H1 (cell line): ENCODE measurements at regions of chr3 and their contacts with region 1.

Region 1: DNA sequence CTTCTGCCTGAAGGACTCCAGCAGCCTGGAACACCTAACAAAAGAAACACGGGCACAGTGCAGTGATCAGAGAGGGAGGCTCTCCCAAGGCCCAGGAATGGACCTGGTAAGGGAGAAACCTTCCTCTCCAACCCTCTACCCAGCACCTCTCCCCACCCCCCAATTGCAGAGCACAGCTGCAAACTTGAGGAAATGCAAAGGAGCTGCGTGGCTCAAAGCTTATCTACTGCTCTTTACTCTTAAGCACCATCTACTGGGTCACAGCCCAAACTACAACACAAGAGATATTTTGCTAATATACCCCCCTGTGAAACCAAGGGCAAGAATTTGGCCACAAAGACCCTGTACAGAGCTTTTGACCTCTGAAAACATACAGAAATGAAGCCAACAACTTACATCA is 328.3 kb downstream of the OXSM start:
- DNase-seq: peak; percentile 27 to 47
- H3K4me3 ChIP-seq: no peak overlapping the region
- H3K27ac ChIP-seq: no peak overlapping the region
- H3K4me1 ChIP-seq: peaks cover 0 to 4% (median 2%) of the 10 kb centered on the region in 4 experiments; a peak in 4 of 7 replicates
- H3K27me3 ChIP-seq: no peaks in the 10 kb centered on the region
- CTCF ChIP-seq: peak in 2 of 3 experiments; percentile 61 to 68; a peak in 3 of 4 replicates
- EP300 ChIP-seq: no peak
- POLR2A ChIP-seq: no peak
- RAD21 ChIP-seq: peak; percentile 75 to 78

Region 2: DNA sequence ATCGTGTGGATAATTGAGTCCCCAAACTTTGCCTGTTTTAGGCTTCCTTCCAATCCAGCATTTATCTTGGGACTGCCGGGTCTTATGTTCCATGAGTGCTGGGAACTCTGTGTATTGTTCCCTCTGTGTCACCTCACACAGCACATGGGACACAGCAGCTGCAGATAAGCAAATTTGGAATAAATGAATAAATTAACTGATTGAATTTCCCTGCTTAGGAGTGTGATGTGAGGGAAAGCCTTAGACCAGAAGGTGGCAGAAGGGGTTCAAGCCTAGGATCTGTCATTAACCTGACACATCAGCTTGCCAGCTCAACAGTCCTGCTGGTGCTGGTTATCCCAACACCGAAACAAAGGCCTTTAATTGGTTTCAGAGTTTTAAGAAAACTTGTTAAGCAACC is 214.0 kb before region 1 on chr3:
- CTCF ChIA-PET with region 1: interaction called, 30 read pairs
- POLR2A ChIA-PET with region 1: no interaction called
- DNase-seq: no peak
- H3K4me3 ChIP-seq: no peak overlapping the region
- H3K27ac ChIP-seq: no peak overlapping the region
- H3K4me1 ChIP-seq: peaks cover 0 to 9% (median 0%) of the 10 kb centered on the region in 4 experiments; a peak in 1 of 7 replicates
- H3K27me3 ChIP-seq: no peaks in the 10 kb centered on the region
- CTCF ChIP-seq: peak in 2 of 3 experiments; percentile 44 to 45; a peak in 3 of 4 replicates
- EP300 ChIP-seq: no peak
- POLR2A ChIP-seq: no peak
- RAD21 ChIP-seq: peak; percentile 63 to 64

Region 3: GRCh38 chr3:25910997-25911396 is 207.2 kb before region 1 on chr3:
- CTCF ChIA-PET with region 1: interaction called, 30 read pairs
- POLR2A ChIA-PET with region 1: no interaction called
- DNase-seq: peak in 1 of 2 experiments; percentile 70
- H3K4me3 ChIP-seq: no peak overlapping the region
- H3K27ac ChIP-seq: no peak overlapping the region
- H3K4me1 ChIP-seq: no peaks in the 10 kb centered on the region
- H3K27me3 ChIP-seq: no peaks in the 10 kb centered on the region
- CTCF ChIP-seq: peak in 2 of 3 experiments; percentile 61 to 81; a peak in 3 of 4 replicates
- EP300 ChIP-seq: no peak
- POLR2A ChIP-seq: no peak
- RAD21 ChIP-seq: peak; percentile 45 to 60

Region 4: GRCh38 chr3:26106228-26106627 is 11.9 kb before region 1 on chr3:
- CTCF ChIA-PET with region 1: interaction called, 14 read pairs
- POLR2A ChIA-PET with region 1: interaction called, 3 read pairs
- DNase-seq: no peak
- H3K4me3 ChIP-seq: no peak overlapping the region
- H3K27ac ChIP-seq: no peak overlapping the region
- H3K4me1 ChIP-seq: no peaks in the 10 kb centered on the region
- H3K27me3 ChIP-seq: no peaks in the 10 kb centered on the region
- CTCF ChIP-seq: no peak
- EP300 ChIP-seq: no peak
- POLR2A ChIP-seq: no peak
- RAD21 ChIP-seq: no peak

Region 5: GRCh38 chr3:26132942-26133341 is 14.8 kb after region 1 on chr3:
- CTCF ChIA-PET with region 1: interaction called, 11 read pairs
- POLR2A ChIA-PET with region 1: no interaction called
- DNase-seq: no peak
- H3K4me3 ChIP-seq: no peak overlapping the region
- H3K27ac ChIP-seq: no peak overlapping the region
- H3K4me1 ChIP-seq: no peaks in the 10 kb centered on the region
- H3K27me3 ChIP-seq: no peaks in the 10 kb centered on the region
- CTCF ChIP-seq: no peak
- EP300 ChIP-seq: no peak
- POLR2A ChIP-seq: no peak
- RAD21 ChIP-seq: no peak